ENCODE measurements at regions of chr17 and their contacts with region 1.

Region 1: DNA sequence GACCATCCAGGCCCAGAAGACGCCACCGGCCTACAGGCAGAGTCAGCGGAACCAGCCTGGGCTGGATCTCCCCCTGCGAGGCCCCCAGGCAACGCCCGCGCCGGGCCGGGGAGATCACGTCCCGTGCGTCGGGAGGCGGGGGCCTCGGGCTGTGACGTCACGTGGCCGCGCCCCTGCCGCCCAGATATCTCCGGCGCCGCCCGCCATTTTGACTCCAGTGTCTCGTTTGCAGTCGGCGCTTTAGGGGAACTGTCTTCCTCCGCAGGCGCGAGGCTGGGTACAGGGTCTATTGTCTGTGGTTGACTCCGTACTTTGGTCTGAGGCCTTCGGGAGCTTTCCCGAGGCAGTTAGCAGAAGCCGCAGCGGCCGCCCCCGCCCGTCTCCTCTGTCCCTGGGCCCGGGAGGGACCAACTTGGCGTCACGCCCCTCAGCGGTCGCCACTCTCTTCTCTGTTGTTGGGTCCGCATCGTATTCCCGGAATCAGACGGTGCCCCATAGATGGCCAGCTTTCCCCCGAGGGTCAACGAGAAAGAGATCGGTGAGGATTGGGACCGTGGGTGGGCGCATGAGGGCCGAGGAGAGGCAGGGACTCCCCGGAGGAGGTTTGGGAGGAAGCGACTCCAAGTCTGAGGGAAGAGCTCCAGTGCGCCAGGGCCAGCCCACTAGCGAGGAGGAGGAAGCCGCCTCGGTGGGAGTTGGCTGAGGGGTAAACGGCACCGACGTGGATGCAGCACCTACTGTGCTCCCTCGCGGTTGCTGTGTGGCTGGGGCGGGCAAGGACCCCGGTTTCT is at the start of gene WSB1:
- DNase-seq: peak; percentile 91 to 96 (median 94)
- ATAC-seq: peak; percentile 94
- H3K4me3 ChIP-seq: peak within 1 kb of the TSS; percentile 99
- H3K4me3 Mint-ChIP-seq: peak within 1 kb of the TSS; percentile 90 to 100 (median 96)
- H3K27ac ChIP-seq: peak within 1 kb of the TSS; percentile 96
- H3K27ac Mint-ChIP-seq: peak within 1 kb of the TSS; percentile 94 to 100 (median 99)
- H3K4me1 ChIP-seq: peaks cover 19 to 34% of the 10 kb centered on the region in 2 donors
- H3K4me1 Mint-ChIP-seq: peaks cover 21 to 51% (median 43%) of the 10 kb centered on the region in 7 donors
- H3K27me3 ChIP-seq: no peaks in the 10 kb centered on the region
- H3K27me3 Mint-ChIP-seq: no peaks in the 10 kb centered on the region
- total RNA-seq, gene WSB1: 110 to 185 (median 134) TPM

Region 2: DNA sequence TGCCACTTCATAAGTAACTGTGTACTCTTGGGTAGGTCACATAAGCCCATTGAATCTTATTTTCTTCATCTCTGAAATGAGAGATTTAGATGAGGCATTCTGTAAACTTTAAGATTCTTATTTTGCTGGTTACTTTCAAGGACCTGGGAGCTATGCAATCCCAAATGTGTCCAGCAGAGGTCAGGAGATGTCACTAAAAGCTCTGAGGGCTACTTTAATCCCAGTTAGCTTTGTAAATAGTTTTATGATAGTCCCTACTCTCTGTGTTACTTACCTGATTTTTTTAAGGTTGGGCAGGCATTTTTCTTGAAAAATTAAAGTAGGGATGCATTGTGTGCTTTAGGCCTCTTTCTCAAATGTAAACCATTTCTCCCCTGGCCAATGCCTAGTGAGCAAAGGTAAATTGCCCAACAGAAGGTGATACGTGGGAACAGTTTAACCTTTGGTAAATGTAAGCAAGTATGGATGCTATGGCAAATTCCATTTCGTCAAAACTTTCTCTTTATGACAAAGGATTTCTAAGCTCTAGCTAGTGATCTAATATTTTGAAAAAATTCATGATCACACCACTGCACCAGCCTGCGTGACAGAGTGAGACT is 57.3 kb before region 1 on chr17:
- CTCF ChIA-PET with region 1: interaction called, 3 read pairs
- POLR2A ChIA-PET with region 1: interaction called, 11 read pairs
- intact Hi-C with region 1: loop called (anchors 1 to 2 kb)
- DNase-seq: peak; percentile 30 to 69 (median 58)
- ATAC-seq: peak; percentile 87
- H3K4me3 ChIP-seq: no peak overlapping the region
- H3K4me3 Mint-ChIP-seq: no peak overlapping the region
- H3K27ac ChIP-seq: no peak overlapping the region
- H3K27ac Mint-ChIP-seq: no peak overlapping the region
- H3K4me1 ChIP-seq: no peaks in the 10 kb centered on the region
- H3K4me1 Mint-ChIP-seq: peaks cover 0 to 19% (median 0%) of the 10 kb centered on the region in 7 donors
- H3K27me3 ChIP-seq: no peaks in the 10 kb centered on the region
- H3K27me3 Mint-ChIP-seq: peaks cover 0 to 19% (median 0%) of the 10 kb centered on the region in 5 donors

Region 3: DNA sequence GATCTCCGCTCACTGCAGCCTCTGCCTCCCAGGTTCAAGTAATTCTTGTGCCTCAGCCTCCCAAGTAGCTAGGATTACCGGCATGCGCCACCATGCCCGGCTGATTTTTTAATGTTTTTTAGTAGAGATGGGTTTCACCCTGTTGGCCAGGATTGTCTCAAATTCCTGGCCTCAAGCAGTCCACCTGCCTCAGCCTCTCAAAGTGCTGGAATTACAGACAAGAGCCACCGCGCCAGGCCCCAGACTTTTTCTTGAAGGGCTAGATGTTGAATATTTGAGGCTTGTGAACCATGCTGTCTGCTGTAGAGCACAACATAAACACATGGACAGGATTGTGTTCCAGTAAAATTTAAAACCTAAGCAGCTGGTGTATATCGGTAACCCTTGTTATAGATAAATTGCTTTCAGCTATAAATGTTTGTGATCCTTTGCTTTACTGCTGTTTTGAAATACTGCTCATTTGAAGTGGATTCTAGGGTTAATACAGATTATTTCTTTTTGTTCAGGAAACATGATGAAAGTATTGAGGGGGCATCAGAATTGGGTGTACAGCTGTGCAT is 12.3 kb after region 1 on chr17:
- CTCF ChIA-PET with region 1: interaction called, 3 read pairs
- POLR2A ChIA-PET with region 1: interaction called, 19 read pairs
- intact Hi-C with region 1: loop called in 1 of 2 experiments (anchors 1 kb)
- DNase-seq: no peak
- ATAC-seq: no peak
- H3K4me3 ChIP-seq: no peak overlapping the region
- H3K4me3 Mint-ChIP-seq: no peak overlapping the region
- H3K27ac ChIP-seq: no peak overlapping the region
- H3K27ac Mint-ChIP-seq: peak overlapping the region in 2 of 9 donors; percentile 19 to 45
- H3K4me1 ChIP-seq: no peaks in the 10 kb centered on the region
- H3K4me1 Mint-ChIP-seq: peaks cover 19 to 28% (median 23%) of the 10 kb centered on the region in 7 donors
- H3K27me3 ChIP-seq: no peaks in the 10 kb centered on the region
- H3K27me3 Mint-ChIP-seq: no peaks in the 10 kb centered on the region

Region 4: GRCh38 chr17:27353461-27354050 is 59.5 kb after region 1 on chr17:
- CTCF ChIA-PET with region 1: interaction called, 3 read pairs
- POLR2A ChIA-PET with region 1: interaction called, 23 read pairs
- intact Hi-C with region 1: loop called (anchors 1 kb)
- DNase-seq: peak; percentile 68 to 95 (median 77)
- ATAC-seq: peak; percentile 96
- H3K4me3 ChIP-seq: peak overlapping the region; percentile 85
- H3K4me3 Mint-ChIP-seq: peak overlapping the region; percentile 30 to 93 (median 78)
- H3K27ac ChIP-seq: peak overlapping the region; percentile 83
- H3K27ac Mint-ChIP-seq: peak overlapping the region; percentile 46 to 94 (median 79)
- H3K4me1 ChIP-seq: peaks cover 3 to 12% of the 10 kb centered on the region in 2 donors
- H3K4me1 Mint-ChIP-seq: peaks cover 12 to 31% (median 21%) of the 10 kb centered on the region in 7 donors
- H3K27me3 ChIP-seq: no peaks in the 10 kb centered on the region
- H3K27me3 Mint-ChIP-seq: no peaks in the 10 kb centered on the region

Region 5: GRCh38 chr17:27367121-27367991 is 73.3 kb after region 1 on chr17:
- CTCF ChIA-PET with region 1: no interaction called
- POLR2A ChIA-PET with region 1: no interaction called
- intact Hi-C with region 1: no loop called
- DNase-seq: no peak
- ATAC-seq: peak; percentile 18
- H3K4me3 ChIP-seq: no peak overlapping the region
- H3K4me3 Mint-ChIP-seq: no peak overlapping the region
- H3K27ac ChIP-seq: no peak overlapping the region
- H3K27ac Mint-ChIP-seq: peak overlapping the region in 1 of 9 donors; percentile 66
- H3K4me1 ChIP-seq: no peaks in the 10 kb centered on the region
- H3K4me1 Mint-ChIP-seq: no peaks in the 10 kb centered on the region
- H3K27me3 ChIP-seq: no peaks in the 10 kb centered on the region
- H3K27me3 Mint-ChIP-seq: peaks cover 0 to 11% (median 0%) of the 10 kb centered on the region in 5 donors

Region 6: GRCh38 chr17:27892866-27893769 is 599.0 kb after region 1 on chr17 and contains the start of gene LYRM9:
- CTCF ChIA-PET with region 1: no interaction called
- POLR2A ChIA-PET with region 1: no interaction called
- intact Hi-C with region 1: loop called (anchors 5 to 10 kb)
- DNase-seq: peak; percentile 87 to 99 (median 93)
- ATAC-seq: peak; percentile 100
- H3K4me3 ChIP-seq: peak within 1 kb of the TSS; percentile 80
- H3K4me3 Mint-ChIP-seq: peak within 1 kb of the TSS; percentile 76 to 95 (median 88)
- H3K27ac ChIP-seq: peak within 1 kb of the TSS; percentile 73
- H3K27ac Mint-ChIP-seq: peak within 1 kb of the TSS; percentile 69 to 89 (median 84)
- H3K4me1 ChIP-seq: peaks cover 0 to 13% of the 10 kb centered on the region in 2 donors
- H3K4me1 Mint-ChIP-seq: peaks cover 15 to 29% (median 26%) of the 10 kb centered on the region in 7 donors
- H3K27me3 ChIP-seq: no peaks in the 10 kb centered on the region
- H3K27me3 Mint-ChIP-seq: peaks cover 15 to 45% (median 19%) of the 10 kb centered on the region in 5 donors
- total RNA-seq, gene LYRM9: 4.2 to 24.5 (median 14.0) TPM

Region 7: GRCh38 chr17:28133562-28133970 is 839.5 kb after region 1 on chr17:
- CTCF ChIA-PET with region 1: no interaction called
- POLR2A ChIA-PET with region 1: no interaction called
- intact Hi-C with region 1: no loop called
- DNase-seq: no peak
- ATAC-seq: no peak
- H3K4me3 ChIP-seq: no peak overlapping the region
- H3K4me3 Mint-ChIP-seq: no peak overlapping the region
- H3K27ac ChIP-seq: no peak overlapping the region
- H3K27ac Mint-ChIP-seq: no peak overlapping the region
- H3K4me1 ChIP-seq: no peaks in the 10 kb centered on the region
- H3K4me1 Mint-ChIP-seq: peaks cover 0 to 5% (median 0%) of the 10 kb centered on the region in 7 donors
- H3K27me3 ChIP-seq: no peaks in the 10 kb centered on the region
- H3K27me3 Mint-ChIP-seq: no peaks in the 10 kb centered on the region